Activated T-helper 1 cell treated with anti-CD3 and anti-CD28 coated beads, Interleukin-12 subunit alpha, Interleukin-12 subunit beta, Interleukin-2, Interleukin-4 antibody, amounts not matched to agents 30 ng/mL and 10 ng/mL and 1 ng/mL, durations not matched to agents 14 hours and 24 hours and 36 hours (primary cell): ENCODE measurements at regions of chr20 and their contacts with region 1.

Region 1: DNA sequence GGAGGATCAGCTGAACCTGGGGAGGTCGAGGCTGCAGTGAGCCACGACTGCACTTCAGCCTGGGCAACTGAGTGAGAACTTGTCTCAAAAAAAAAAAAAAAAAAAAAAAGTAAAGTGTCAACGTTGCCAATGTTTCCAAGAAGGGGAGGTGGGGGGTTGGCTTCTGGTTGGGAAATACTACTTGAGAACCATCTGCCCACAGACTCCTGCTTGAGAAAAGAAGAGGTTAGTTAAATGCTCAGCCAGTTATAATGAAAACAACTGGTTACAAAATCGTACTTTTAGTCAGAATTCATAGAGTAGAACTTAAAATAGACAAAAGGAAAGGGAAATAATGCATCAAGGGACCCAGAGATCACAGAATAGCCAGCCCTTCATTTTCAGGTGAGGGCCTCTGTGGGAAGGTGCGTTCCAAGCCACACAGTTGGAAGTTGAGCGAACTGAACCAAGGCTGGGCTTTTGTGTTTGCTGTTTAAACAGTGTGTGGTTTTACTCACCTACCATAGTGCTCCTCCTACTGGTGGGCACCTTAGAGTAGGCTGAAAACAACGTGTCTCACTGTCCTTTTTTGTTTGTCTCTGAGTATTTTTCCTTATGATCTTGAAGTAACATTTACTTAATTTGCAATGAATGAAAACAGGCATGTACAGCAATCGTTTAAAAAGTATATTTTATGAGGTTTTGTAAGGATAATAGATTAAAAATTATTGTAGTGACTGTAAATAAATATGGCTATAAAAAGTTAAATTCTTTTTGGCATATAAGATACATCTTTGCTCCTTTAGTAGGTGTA is 200.7 kb downstream of the BCAS1 start:
- DNase-seq: peak; percentile 70
- H3K4me3 Mint-ChIP-seq: peak overlapping the region; percentile 62
- H3K27ac Mint-ChIP-seq: peak overlapping the region; percentile 85
- H3K4me1 Mint-ChIP-seq: peaks cover 73% of the 10 kb centered on the region
- H3K27me3 Mint-ChIP-seq: no peaks in the 10 kb centered on the region

Region 2: DNA sequence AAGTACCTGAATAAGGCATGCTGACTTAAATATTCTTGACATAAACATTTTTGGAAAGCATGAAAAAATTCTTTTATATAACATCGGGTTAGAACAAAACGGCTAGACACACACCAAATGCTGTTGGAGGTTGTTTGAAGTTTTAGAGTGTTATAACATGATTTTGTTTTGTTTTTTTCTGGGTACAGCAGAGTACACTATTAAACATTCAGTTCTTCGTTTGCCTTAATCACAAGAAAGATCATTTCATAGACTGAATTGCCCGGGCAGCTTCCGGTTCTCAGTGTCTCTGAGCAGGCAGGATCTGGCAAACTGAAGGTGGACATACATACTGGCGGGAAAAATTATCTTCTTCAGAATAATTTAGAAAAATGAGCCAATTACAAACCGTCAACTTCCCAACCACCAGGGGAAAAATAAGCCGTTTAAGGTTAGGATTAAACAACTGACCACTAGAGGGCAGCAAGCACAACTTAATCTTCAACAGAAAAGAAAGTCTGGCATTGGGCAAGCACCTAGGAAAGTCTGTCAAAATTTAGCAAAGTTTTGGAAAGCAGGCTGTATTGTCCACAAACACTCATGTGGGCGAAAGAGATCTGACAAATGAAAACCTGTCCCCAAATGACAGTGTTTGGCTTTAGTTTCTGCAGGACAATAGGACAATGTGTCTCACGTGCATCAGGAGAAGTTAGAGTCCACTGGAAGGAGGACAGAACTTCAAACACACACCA is 291.0 kb before region 1 on chr20:
- intact Hi-C with region 1: loop called (anchors 1 kb)
- DNase-seq: peak; percentile 62
- H3K4me3 Mint-ChIP-seq: peak overlapping the region; percentile 83
- H3K27ac Mint-ChIP-seq: peak overlapping the region; percentile 88
- H3K4me1 Mint-ChIP-seq: peaks cover 85% of the 10 kb centered on the region
- H3K27me3 Mint-ChIP-seq: no peaks in the 10 kb centered on the region

Region 3: GRCh38 chr20:53652090-53652858 is 217.4 kb before region 1 on chr20:
- intact Hi-C with region 1: loop called (anchors 1 kb)
- DNase-seq: no peak
- H3K4me3 Mint-ChIP-seq: peak overlapping the region; percentile 70
- H3K27ac Mint-ChIP-seq: peak overlapping the region; percentile 97
- H3K4me1 Mint-ChIP-seq: peaks cover 41% of the 10 kb centered on the region
- H3K27me3 Mint-ChIP-seq: no peaks in the 10 kb centered on the region

Region 4: GRCh38 chr20:53718142-53719021 is 151.3 kb before region 1 on chr20:
- intact Hi-C with region 1: no loop called
- DNase-seq: no peak
- H3K4me3 Mint-ChIP-seq: no peak overlapping the region
- H3K27ac Mint-ChIP-seq: no peak overlapping the region
- H3K4me1 Mint-ChIP-seq: peaks cover 27% of the 10 kb centered on the region
- H3K27me3 Mint-ChIP-seq: no peaks in the 10 kb centered on the region

Region 5: DNA sequence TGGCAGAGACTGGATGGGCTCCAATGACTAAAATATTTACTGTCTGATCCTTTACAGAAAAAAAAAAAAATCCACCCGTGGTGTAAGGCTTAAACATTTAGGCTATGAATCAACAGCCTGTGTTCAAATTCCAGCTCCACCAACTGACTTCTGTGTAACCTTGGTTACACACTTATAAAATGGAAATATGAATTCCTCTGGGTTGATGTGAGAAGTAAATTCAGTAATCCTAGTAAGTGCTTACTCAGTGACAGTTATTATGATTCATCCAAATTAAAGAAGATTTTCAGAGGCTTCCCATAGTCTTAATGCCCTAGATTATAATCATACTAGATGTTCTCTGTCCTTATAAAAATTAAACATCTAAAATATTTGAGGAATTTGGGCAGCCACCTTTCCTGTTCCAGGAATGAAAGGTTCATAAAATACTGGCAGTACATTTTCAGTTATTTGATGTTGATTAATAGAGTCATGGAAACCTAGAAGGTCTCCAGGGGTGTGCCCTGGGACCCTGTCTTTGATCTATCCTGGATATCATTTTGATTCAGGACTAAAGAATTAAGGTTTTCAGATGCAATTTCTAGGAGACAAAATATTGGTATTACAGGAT is 95.8 kb before region 1 on chr20:
- intact Hi-C with region 1: no loop called
- DNase-seq: no peak
- H3K4me3 Mint-ChIP-seq: no peak overlapping the region
- H3K27ac Mint-ChIP-seq: no peak overlapping the region
- H3K4me1 Mint-ChIP-seq: no peaks in the 10 kb centered on the region
- H3K27me3 Mint-ChIP-seq: no peaks in the 10 kb centered on the region

Region 6: DNA sequence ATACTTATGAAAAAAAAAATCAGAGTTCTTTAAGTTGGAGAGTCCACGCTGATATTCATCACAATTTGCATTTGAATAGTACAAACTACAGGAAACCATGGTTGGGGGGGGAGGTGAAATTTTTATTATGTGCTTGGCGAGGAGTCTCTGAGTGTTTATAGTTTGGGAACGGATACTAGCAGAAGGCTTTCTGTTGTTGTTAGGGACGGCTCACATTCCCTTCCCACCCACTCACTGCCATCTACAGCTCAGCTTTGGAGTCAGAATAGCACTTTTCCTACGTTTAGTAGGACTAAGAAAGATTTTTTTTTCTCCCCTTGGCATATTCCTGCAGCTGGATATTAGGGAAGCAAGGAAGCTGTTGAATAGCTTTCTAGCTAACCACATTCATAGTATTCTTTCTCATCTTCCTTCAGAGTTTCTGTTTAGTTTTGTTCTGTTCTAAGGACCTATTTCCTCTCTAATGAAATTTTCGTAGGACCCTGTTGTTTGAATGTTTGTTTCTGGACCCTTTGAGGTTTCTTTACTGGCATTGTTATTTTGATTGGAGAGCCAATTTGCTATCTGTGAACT is 40.9 kb before region 1 on chr20:
- intact Hi-C with region 1: loop called (anchors 5 kb)
- DNase-seq: no peak
- H3K4me3 Mint-ChIP-seq: peak overlapping the region; percentile 84
- H3K27ac Mint-ChIP-seq: peak overlapping the region; percentile 90
- H3K4me1 Mint-ChIP-seq: peaks cover 48% of the 10 kb centered on the region
- H3K27me3 Mint-ChIP-seq: no peaks in the 10 kb centered on the region

Region 7: DNA sequence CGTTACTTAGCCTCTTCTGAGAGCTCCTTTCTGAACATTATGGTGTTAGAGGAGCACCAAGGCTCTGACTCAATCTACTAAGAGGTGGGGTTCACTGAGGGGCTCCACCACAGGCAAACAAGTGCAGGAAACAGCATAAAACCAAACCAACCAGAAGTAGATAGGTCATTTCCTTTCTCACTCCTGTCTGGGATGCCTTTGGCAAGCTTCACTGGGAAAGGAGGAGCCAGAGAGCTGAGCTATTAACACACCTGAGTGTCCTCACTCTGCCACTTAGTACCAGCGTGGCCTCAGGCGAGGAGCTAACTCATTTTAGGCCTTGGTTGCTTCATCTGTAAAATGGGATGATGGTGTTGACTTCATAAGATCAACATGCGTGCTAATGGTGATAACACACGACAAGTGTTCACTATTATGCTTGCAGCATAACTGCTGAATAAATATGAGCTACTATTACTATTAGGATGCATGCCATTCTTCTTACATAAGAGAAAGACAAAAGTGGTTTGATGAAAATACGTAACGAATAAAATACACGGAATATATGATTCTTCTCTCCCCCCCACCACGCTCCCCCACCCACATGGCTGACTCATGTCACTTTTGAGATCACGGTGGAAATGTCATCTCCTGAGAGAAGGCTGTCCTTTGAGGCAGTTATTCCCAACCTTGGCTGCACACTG is 15.3 kb after region 1 on chr20:
- intact Hi-C with region 1: loop called (anchors 1 kb)
- DNase-seq: no peak
- H3K4me3 Mint-ChIP-seq: peak overlapping the region; percentile 17
- H3K27ac Mint-ChIP-seq: peak overlapping the region; percentile 45
- H3K4me1 Mint-ChIP-seq: peaks cover 40% of the 10 kb centered on the region
- H3K27me3 Mint-ChIP-seq: no peaks in the 10 kb centered on the region

Region 8: GRCh38 chr20:53915446-53916172 is 45.9 kb after region 1 on chr20:
- intact Hi-C with region 1: loop called (anchors 1 kb)
- DNase-seq: peak; percentile 84
- H3K4me3 Mint-ChIP-seq: peak overlapping the region; percentile 89
- H3K27ac Mint-ChIP-seq: peak overlapping the region; percentile 93
- H3K4me1 Mint-ChIP-seq: peaks cover 42% of the 10 kb centered on the region
- H3K27me3 Mint-ChIP-seq: no peaks in the 10 kb centered on the region

Region 9: DNA sequence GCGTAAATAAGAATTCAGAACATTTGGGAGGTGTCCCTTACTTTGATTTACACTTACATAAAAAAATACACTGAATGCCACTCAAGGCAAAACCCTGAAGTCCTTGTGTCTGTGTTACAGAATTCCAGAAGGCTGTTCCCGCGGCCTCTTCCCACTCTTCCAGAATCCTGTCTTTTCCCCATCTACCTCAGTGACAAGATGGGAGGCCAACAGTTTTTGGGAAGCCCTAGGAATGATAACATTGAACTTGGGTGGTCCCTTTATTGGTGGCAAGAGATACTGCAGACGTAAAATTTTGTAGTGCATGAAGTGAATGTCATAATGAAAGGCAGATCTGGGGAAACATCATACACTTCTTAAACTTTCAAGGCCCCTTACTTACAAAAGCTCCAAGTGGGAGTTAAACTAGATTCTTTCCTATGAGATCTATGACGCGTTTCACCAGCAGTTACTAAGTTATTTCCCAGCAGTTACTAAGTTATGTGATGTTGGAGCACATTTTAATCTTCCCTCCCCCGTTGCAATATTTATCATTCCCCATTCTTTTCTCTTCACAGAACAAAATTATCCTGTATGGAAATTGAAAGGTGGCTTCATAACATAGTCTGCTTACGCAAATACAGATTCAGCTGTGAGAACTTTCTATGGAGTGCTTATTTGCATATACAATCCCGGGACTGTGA is 121.2 kb after region 1 on chr20:
- intact Hi-C with region 1: no loop called
- DNase-seq: no peak
- H3K4me3 Mint-ChIP-seq: no peak overlapping the region
- H3K27ac Mint-ChIP-seq: no peak overlapping the region
- H3K4me1 Mint-ChIP-seq: no peaks in the 10 kb centered on the region
- H3K27me3 Mint-ChIP-seq: peaks cover 21% of the 10 kb centered on the region